ENCODE measurements at regions of chr22 and their contacts with region 1.

Region 1: DNA sequence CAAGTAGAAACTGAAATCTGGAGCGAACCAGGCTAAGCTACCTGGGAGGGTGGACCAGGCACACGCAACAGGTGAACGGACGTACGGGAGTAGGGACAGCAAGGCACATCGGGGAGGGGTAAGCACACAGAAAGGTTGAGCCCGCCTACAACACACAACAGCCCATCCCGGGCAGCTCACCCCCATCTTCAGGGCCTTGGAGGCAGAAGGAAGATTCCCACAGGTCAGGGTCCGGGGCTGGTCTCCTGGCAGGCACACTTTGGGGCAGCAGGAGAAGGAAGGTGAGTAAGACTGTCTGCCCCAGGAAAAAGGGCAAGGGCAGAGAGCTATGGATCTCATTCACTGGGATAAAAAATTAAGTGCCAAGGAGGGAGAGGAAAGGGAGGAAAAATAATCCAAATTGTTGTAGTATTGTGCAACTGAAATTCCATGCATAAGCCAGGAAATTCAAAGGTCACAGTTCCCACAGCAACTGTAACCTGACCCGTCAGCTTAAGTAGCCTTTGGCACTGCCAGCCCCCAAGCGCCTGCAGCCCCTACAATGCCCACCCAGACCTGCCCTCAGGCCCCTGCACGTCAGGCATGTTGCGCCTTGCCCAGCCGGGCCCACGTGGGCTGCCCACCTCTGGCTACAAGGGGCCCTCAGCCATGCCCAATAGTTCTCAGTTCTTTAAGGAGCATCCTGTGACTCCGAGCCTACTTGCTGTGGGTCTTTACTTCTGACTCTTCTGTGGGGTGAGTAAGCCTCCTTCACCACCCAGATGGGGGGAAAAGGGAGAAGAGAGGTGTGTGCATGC is 51.8 kb downstream of the MICAL3 start:
- DNase-seq: peak; percentile 51 to 77 (median 73)
- ATAC-seq: peak; percentile 67 to 71
- H3K4me3 ChIP-seq: no peak overlapping the region
- H3K27ac ChIP-seq: peak overlapping the region; percentile 22
- H3K4me1 ChIP-seq: peaks cover 24% of the 10 kb centered on the region
- H3K27me3 ChIP-seq: no peaks in the 10 kb centered on the region

Region 2: GRCh38 chr22:17430412-17430811 is 542.2 kb before region 1 on chr22:
- intact Hi-C with region 1: no loop called
- DNase-seq: no peak
- ATAC-seq: peak; percentile 86 to 88
- H3K4me3 ChIP-seq: no peak overlapping the region
- H3K27ac ChIP-seq: no peak overlapping the region
- H3K4me1 ChIP-seq: peaks cover 2% of the 10 kb centered on the region
- H3K27me3 ChIP-seq: no peaks in the 10 kb centered on the region

Region 3: GRCh38 chr22:17924734-17925364 is 47.7 kb before region 1 on chr22:
- intact Hi-C with region 1: loop called in 1 of 4 experiments (anchors 5 kb)
- DNase-seq: no peak
- ATAC-seq: no peak
- H3K4me3 ChIP-seq: no peak overlapping the region
- H3K27ac ChIP-seq: peak overlapping the region; percentile 16
- H3K4me1 ChIP-seq: peaks cover 38% of the 10 kb centered on the region
- H3K27me3 ChIP-seq: no peaks in the 10 kb centered on the region